GM12878 (cell line): ENCODE measurements at regions of chr6 and their contacts with region 1.

Region 1: GRCh38 chr6:51608932-51609331 is 478.5 kb downstream of the PKHD1 start:
- DNase-seq: no peak
- ATAC-seq: no peak
- H3K4me3 ChIP-seq: no peak overlapping the region
- H3K27ac ChIP-seq: no peak overlapping the region
- H3K4me1 ChIP-seq: no peaks in the 10 kb centered on the region
- H3K27me3 ChIP-seq: no peaks in the 10 kb centered on the region
- CTCF ChIP-seq: no peak
- EP300 ChIP-seq: no peak
- POLR2A ChIP-seq: no peak
- RAD21 ChIP-seq: no peak

Region 2: GRCh38 chr6:51598171-51598570 is 10.8 kb before region 1 on chr6:
- CTCF ChIA-PET with region 1: interaction called, 4 read pairs
- POLR2A ChIA-PET with region 1: no interaction called
- RAD21 ChIA-PET with region 1: no interaction called
- SMC1A ChIA-PET with region 1: interaction called, 10 read pairs
- in situ Hi-C with region 1: no loop called
- intact Hi-C with region 1: no loop called
- DNase-seq: no peak
- ATAC-seq: no peak
- H3K4me3 ChIP-seq: no peak overlapping the region
- H3K27ac ChIP-seq: no peak overlapping the region
- H3K4me1 ChIP-seq: no peaks in the 10 kb centered on the region
- H3K27me3 ChIP-seq: no peaks in the 10 kb centered on the region
- CTCF ChIP-seq: no peak
- EP300 ChIP-seq: no peak
- POLR2A ChIP-seq: no peak
- RAD21 ChIP-seq: no peak